Activated CD4-positive, alpha-beta T cell treated with anti-CD3 and anti-CD28 coated beads for 36 hours (primary cell): ENCODE measurements at regions of chr9 and their contacts with region 1.

Region 1: DNA sequence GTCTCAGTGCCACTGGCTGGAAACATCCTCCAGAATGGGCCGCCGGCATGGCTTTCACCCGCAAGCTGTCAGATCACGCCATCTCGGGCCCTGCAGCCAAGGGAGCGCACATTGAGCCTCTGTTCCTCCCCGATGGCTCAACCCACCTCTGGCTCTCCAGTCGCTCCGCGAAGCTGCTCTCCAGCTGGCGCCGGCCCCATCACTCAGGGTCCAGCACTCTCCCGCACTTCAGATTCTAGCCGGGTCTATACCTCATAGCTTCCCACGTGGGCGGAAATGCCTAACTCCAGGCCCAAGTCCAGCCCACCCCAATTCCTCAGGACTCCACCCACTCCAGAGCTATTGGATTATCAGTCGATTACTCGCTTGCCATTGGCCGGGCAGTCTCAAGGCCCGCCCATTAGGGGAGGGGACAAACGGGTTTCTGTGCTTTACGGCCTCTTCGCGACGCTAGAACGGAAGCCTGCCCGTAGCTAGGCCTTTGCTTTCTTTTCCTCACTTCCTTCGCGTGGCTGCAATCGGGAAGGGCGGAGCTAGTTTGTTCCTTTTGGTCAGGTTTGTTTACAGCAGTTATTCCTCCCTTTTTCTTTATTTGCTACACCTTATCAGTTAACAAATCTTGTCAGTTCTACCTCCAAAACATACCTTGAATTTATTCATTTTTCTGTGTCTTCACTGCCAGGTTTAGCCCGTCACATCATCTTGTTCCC is at the start of gene NOL6:
- DNase-seq: peak; percentile 98
- ATAC-seq: peak; percentile 100
- H3K4me3 Mint-ChIP-seq: peak within 1 kb of the TSS; percentile 100
- H3K27ac Mint-ChIP-seq: peak within 1 kb of the TSS; percentile 95
- H3K4me1 Mint-ChIP-seq: peaks cover 22% of the 10 kb centered on the region
- H3K27me3 Mint-ChIP-seq: no peaks in the 10 kb centered on the region
- total RNA-seq, gene NOL6: 39.0 to 39.4 TPM

Region 2: DNA sequence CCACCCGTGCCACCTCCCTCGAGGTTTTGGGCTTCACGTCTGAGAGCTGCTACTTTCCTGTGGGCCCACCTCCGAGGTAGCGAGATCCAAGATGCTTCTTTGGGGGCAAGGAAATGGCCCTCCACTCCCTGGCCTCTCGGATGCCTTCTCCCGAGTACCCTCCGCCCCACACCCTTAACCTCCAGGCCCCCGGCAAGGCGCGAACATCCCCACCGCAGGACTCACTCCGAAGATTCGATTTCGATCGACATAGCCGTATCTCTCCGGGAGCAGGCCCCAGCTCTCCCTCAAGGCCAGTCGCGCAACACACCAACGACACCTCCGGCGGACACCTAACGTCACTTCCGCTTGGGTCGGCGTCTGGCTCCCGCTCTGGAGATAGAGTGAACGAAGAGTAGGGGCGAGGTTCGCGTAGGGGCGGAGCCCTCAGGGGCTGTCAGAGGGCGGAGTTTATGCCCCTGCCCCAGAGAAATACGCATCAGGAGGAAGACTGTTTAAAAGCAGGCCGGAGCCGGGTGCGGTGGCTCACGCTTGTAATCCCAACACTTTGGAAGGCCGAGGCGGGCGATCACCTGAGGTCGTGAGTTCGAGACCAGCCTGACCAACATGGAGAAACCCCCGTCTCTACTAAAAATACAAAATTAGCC is 397.3 kb before region 1 on chr9 and contains the start of gene SMU1:
- CTCF ChIA-PET with region 1: no interaction called
- POLR2A ChIA-PET with region 1: no interaction called
- intact Hi-C with region 1: loop called in 1 of 2 experiments (anchors 10 kb)
- DNase-seq: peak; percentile 98
- ATAC-seq: peak; percentile 93
- H3K4me3 Mint-ChIP-seq: peak within 1 kb of the TSS; percentile 100
- H3K27ac Mint-ChIP-seq: peak within 1 kb of the TSS; percentile 100
- H3K4me1 Mint-ChIP-seq: peaks cover 39% of the 10 kb centered on the region
- H3K27me3 Mint-ChIP-seq: no peaks in the 10 kb centered on the region
- total RNA-seq, gene SMU1: 23.2 to 29.6 TPM

Region 3: DNA sequence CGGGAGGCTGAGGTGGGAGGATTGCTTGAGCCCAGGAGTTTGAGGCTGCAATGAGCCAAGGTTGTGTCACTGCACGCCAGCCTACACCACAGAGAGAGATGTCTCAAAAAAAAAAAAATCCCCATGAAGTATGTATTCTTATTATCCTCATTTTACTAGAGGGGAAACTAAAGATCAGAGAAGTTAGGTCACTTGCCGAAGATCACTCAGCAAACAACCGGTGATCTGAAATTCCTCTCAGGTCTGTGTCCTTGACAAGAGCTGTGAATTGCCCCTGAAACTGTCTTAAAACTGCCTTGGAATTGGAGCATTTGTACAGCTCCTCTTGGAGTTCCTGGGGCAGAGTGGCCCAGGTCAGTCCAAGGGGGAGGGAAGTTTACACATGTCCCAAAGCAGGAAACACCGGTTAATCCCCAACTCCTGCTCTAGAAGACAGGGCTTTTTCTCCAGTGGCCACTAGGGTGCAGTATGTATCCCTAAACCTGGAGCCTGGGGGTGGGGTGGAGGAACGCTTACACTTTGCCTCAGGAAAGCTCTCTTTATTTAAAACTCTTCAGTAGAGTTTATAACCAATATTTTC is 99.1 kb before region 1 on chr9:
- CTCF ChIA-PET with region 1: interaction called, 53 read pairs
- POLR2A ChIA-PET with region 1: interaction called, 3 read pairs
- intact Hi-C with region 1: loop called in 1 of 2 experiments (anchors 5 kb)
- DNase-seq: peak; percentile 84
- ATAC-seq: peak; percentile 96
- H3K4me3 Mint-ChIP-seq: no peak overlapping the region
- H3K27ac Mint-ChIP-seq: no peak overlapping the region
- H3K4me1 Mint-ChIP-seq: peaks cover 7% of the 10 kb centered on the region
- H3K27me3 Mint-ChIP-seq: no peaks in the 10 kb centered on the region

Region 4: DNA sequence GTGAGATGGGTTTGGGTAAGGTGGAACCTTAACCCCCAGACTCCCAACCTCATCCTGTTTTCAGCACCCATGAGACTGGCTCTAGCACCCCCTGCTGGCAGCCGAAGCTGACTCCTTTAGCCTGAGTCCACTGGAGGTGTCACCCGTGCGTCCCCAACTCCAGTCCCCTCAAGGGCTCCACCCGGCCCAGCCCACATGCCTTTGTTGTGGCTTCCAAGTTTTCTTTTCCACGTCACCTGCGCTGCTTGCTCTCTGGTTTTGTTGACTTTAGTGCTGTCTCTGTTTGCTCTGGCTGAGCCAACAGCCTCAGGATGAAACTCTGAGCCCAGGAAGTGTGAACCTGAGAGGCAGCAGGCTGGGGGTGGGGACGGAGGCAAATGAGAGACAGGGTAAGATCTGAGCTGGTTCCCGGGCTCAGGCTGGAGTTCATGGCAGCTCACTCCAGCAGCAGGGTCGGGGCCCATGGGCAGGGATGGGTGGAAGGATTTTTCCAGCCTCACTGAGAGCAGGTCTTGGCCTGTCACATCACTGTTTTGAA is 58.2 kb before region 1 on chr9:
- CTCF ChIA-PET with region 1: interaction called, 11 read pairs
- POLR2A ChIA-PET with region 1: interaction called, 3 read pairs
- intact Hi-C with region 1: loop called in 1 of 2 experiments (anchors 1 kb)
- DNase-seq: peak; percentile 97
- ATAC-seq: peak; percentile 92
- H3K4me3 Mint-ChIP-seq: peak overlapping the region; percentile 31
- H3K27ac Mint-ChIP-seq: peak overlapping the region; percentile 95
- H3K4me1 Mint-ChIP-seq: peaks cover 41% of the 10 kb centered on the region
- H3K27me3 Mint-ChIP-seq: no peaks in the 10 kb centered on the region

Region 5: GRCh38 chr9:33452828-33453271 is 20.9 kb before region 1 on chr9:
- CTCF ChIA-PET with region 1: interaction called, 25 read pairs
- POLR2A ChIA-PET with region 1: interaction called, 11 read pairs
- intact Hi-C with region 1: no loop called
- DNase-seq: peak; percentile 83
- ATAC-seq: peak; percentile 87
- H3K4me3 Mint-ChIP-seq: peak overlapping the region; percentile 15
- H3K27ac Mint-ChIP-seq: peak overlapping the region; percentile 85
- H3K4me1 Mint-ChIP-seq: peaks cover 63% of the 10 kb centered on the region
- H3K27me3 Mint-ChIP-seq: no peaks in the 10 kb centered on the region